Esophagus squamous epithelium (tissue), 5 donors: ENCODE measurements at regions of chr12 and their contacts with region 1.

Region 1: GRCh38 chr12:101759396-101760047 is 20.3 kb upstream of the SYCP3 start:
- DNase-seq: no peak
- H3K4me3 ChIP-seq: no peak overlapping the region
- H3K27ac ChIP-seq: no peak overlapping the region
- H3K4me1 ChIP-seq: peaks cover 0 to 16% (median 5%) of the 10 kb centered on the region in 3 donors
- H3K27me3 ChIP-seq: no peaks in the 10 kb centered on the region
- CTCF ChIP-seq: peak; percentile 60 to 82 (median 75)
- POLR2A ChIP-seq: no peak

Region 2: DNA sequence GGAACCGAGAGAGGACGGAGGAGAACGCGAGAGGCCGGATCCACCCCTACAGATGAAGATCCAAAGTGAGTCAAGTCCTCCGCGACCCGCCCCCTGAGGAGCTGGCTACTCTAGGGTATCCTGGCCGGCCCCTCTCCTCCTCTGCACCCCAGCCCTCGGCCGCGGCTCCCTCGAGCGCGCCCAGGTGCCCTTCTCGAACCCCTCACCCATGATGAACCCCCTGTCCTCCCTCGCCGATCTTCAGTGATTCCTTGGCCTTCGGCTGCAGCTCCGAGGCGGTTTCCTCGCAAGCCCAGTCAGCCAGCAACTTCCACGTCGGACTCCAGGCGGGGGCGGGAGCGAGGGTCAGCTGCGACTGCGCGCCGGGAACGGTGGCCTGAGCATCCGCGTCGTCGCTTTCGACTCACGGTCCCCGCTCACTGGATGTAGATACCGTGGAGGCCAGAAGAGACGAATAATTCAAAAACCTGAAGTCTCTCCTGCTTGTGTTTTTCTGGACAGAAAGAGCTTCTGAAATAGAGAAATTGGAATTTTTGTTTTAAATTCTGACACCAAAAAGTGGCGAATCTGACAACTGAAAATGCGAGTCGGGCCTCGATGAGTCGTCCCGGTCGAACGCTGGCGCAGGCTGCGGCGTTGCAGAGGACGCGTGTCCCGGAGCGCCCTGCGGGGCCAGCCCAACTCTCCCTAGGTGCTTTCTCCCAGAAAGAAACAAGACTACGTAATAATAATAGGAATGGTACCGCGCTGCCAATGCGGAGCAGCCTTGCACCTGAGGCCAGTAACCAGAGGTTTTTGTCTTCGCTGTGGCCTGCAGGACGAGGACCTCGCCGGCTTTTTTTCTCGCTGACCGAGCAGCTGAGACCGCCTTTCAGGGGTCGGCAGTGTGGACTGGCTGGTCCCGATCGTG is 351.8 kb before region 1 on chr12 and contains the start of gene ARL1:
- intact Hi-C with region 1: loop called (anchors 10 kb)
- DNase-seq: peak; percentile 19
- H3K4me3 ChIP-seq: peak within 1 kb of the TSS; percentile 77 to 95 (median 80)
- H3K27ac ChIP-seq: peak within 1 kb of the TSS; percentile 90 to 97 (median 94)
- H3K4me1 ChIP-seq: peaks cover 5 to 44% (median 18%) of the 10 kb centered on the region in 3 donors
- H3K27me3 ChIP-seq: no peaks in the 10 kb centered on the region
- CTCF ChIP-seq: no peak
- POLR2A ChIP-seq: peak in 1 of 4 donors; percentile 61
- total RNA-seq, gene ARL1: 43.9 to 62.8 (median 56.2) TPM

Region 3: GRCh38 chr12:101439236-101439635 is 320.3 kb before region 1 on chr12:
- intact Hi-C with region 1: loop called (anchors 10 kb)
- DNase-seq: no peak
- H3K4me3 ChIP-seq: no peak overlapping the region
- H3K27ac ChIP-seq: no peak overlapping the region
- H3K4me1 ChIP-seq: peaks cover 0 to 12% (median 0%) of the 10 kb centered on the region in 3 donors
- H3K27me3 ChIP-seq: no peaks in the 10 kb centered on the region
- CTCF ChIP-seq: no peak
- POLR2A ChIP-seq: no peak

Region 4: GRCh38 chr12:101570047-101570446 is 189.5 kb before region 1 on chr12:
- intact Hi-C with region 1: loop called (anchors 5 kb)
- DNase-seq: no peak
- H3K4me3 ChIP-seq: no peak overlapping the region
- H3K27ac ChIP-seq: no peak overlapping the region
- H3K4me1 ChIP-seq: peaks cover 0 to 4% (median 0%) of the 10 kb centered on the region in 3 donors
- H3K27me3 ChIP-seq: no peaks in the 10 kb centered on the region
- CTCF ChIP-seq: peak in 4 of 6 experiments; percentile 5 to 48 (median 28)
- POLR2A ChIP-seq: no peak

Region 5: GRCh38 chr12:101830367-101831325 is 71.1 kb after region 1 on chr12 and contains the start of gene GNPTAB:
- intact Hi-C with region 1: no loop called
- DNase-seq: peak; percentile 60
- H3K4me3 ChIP-seq: peak within 1 kb of the TSS; percentile 87 to 93 (median 91)
- H3K27ac ChIP-seq: peak within 1 kb of the TSS; percentile 89 to 94 (median 90)
- H3K4me1 ChIP-seq: peaks cover 8 to 55% (median 23%) of the 10 kb centered on the region in 3 donors
- H3K27me3 ChIP-seq: no peaks in the 10 kb centered on the region
- CTCF ChIP-seq: peak; percentile 68 to 97 (median 92)
- POLR2A ChIP-seq: peak in 2 of 4 donors; percentile 69 to 73
- total RNA-seq, gene GNPTAB: 20.8 to 26.3 (median 21.9) TPM